Activated T-helper 2 cell treated with anti-CD3 and anti-CD28 coated beads, Interferon-gamma antibody, Interleukin-2, Interleukin-4, amounts not matched to agents 10 μg/mL and 5 μg/mL and 100 μg/mL, durations not matched to agents 14 hours and 24 hours and 36 hours (primary cell): ENCODE measurements at regions of chr19 and their contacts with region 1.

Region 1: GRCh38 chr19:5790573-5791520 is at the start of gene DUS3L:
- DNase-seq: peak; percentile 95
- H3K4me3 Mint-ChIP-seq: peak within 1 kb of the TSS; percentile 98
- H3K27ac Mint-ChIP-seq: peak within 1 kb of the TSS; percentile 100
- H3K4me1 Mint-ChIP-seq: peaks cover 5% of the 10 kb centered on the region
- H3K27me3 Mint-ChIP-seq: no peaks in the 10 kb centered on the region
- total RNA-seq, gene DUS3L: 74.0 and 84.3 TPM in 2 replicates

Region 2: GRCh38 chr19:5680437-5681368 is 110.1 kb before region 1 on chr19 and contains the starts of genes HSD11B1L and MICOS13:
- intact Hi-C with region 1: loop called (anchors 2 kb)
- DNase-seq: peak; percentile 98
- H3K4me3 Mint-ChIP-seq: peak within 1 kb of the TSS; percentile 95
- H3K27ac Mint-ChIP-seq: peak within 1 kb of the TSS; percentile 87
- H3K4me1 Mint-ChIP-seq: peaks cover 14% of the 10 kb centered on the region
- H3K27me3 Mint-ChIP-seq: no peaks in the 10 kb centered on the region
- total RNA-seq, gene HSD11B1L: 2.0 and 2.5 TPM in 2 replicates
- total RNA-seq, gene MICOS13: 54.3 and 60.9 TPM in 2 replicates